ENCODE measurements at regions of chr1 and their contacts with region 1.

Region 1: DNA sequence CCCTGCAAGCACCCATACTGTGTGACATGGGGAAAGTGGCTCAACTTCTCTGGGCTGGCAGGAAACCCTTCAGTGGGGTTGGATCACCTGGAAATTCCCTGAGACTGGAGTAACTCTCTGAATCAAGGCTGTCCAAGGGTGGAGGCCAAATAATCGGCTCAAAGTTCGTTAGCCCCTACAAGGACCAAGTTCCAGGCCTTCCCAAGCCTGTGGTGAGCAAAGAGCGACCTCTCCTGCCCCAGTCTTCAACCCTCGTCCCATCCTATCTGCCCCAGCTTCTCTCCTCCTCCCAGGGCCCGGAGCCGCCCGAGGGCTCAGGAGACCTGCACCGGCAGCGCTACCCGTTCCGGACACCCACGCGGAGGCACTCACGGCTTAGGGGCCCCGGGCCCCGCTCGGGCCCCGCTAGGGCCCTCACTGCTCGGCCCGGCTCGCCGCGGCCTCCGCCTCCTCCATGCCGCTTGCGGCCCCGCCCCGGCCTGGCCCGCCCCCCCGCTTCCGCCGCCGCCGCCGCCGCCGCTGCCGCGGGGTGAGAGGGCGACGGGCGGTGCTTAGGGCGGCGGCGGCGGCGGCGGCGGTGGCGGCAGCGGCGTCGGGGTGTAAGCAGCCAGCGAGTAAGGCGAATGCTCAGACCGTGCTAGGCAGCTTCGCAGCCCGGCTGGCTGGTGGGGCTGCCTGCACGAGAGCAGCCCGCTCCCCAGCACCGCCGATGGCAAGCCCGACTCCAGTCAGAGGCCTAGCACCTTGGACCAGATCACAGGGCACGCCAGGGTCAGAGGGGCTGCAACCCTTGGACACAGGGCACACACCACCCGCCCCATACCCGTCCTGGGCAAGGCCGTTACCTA is at the start of gene POMGNT1:
- DNase-seq: peak; percentile 73
- H3K4me3 Mint-ChIP-seq: peak within 1 kb of the TSS; percentile 81
- H3K27ac Mint-ChIP-seq: peak within 1 kb of the TSS; percentile 70
- H3K4me1 Mint-ChIP-seq: peaks cover 29% of the 10 kb centered on the region
- H3K27me3 Mint-ChIP-seq: no peaks in the 10 kb centered on the region
- total RNA-seq, gene POMGNT1: 32.4 to 32.9 TPM

Region 2: GRCh38 chr1:46184920-46185658 is 13.1 kb before region 1 on chr1:
- CTCF ChIA-PET with region 1: interaction called, 6 read pairs
- intact Hi-C with region 1: loop called (anchors 1 kb)
- DNase-seq: peak; percentile 81
- H3K4me3 Mint-ChIP-seq: peak overlapping the region; percentile 35
- H3K27ac Mint-ChIP-seq: peak overlapping the region; percentile 87
- H3K4me1 Mint-ChIP-seq: peaks cover 23% of the 10 kb centered on the region
- H3K27me3 Mint-ChIP-seq: no peaks in the 10 kb centered on the region

Region 3: GRCh38 chr1:46506470-46507219 is 308.5 kb after region 1 on chr1:
- CTCF ChIA-PET with region 1: no interaction called
- intact Hi-C with region 1: no loop called
- DNase-seq: no peak
- H3K4me3 Mint-ChIP-seq: no peak overlapping the region
- H3K27ac Mint-ChIP-seq: no peak overlapping the region
- H3K4me1 Mint-ChIP-seq: no peaks in the 10 kb centered on the region
- H3K27me3 Mint-ChIP-seq: peaks cover 17% of the 10 kb centered on the region

Region 4: GRCh38 chr1:46757241-46757959 is 559.2 kb after region 1 on chr1:
- CTCF ChIA-PET with region 1: no interaction called
- intact Hi-C with region 1: no loop called
- DNase-seq: no peak
- H3K4me3 Mint-ChIP-seq: no peak overlapping the region
- H3K27ac Mint-ChIP-seq: no peak overlapping the region
- H3K4me1 Mint-ChIP-seq: no peaks in the 10 kb centered on the region
- H3K27me3 Mint-ChIP-seq: peaks cover 22% of the 10 kb centered on the region

Measured in activated naive CD4-positive, alpha-beta T cell treated with anti-CD3 and anti-CD28 coated beads for 36 hours (primary cell).